Activated B cell treated with CpG ODN at 0.5 μM for 24 hours (primary cell): ENCODE measurements at regions of chr6 and their contacts with region 1.

Region 1: GRCh38 chr6:10747251-10747972 is at the start of gene TMEM14B:
- DNase-seq: peak; percentile 100
- ATAC-seq: peak; percentile 98
- H3K4me3 Mint-ChIP-seq: peak within 1 kb of the TSS; percentile 95
- H3K27ac Mint-ChIP-seq: peak within 1 kb of the TSS; percentile 93
- H3K4me1 Mint-ChIP-seq: peaks cover 34% of the 10 kb centered on the region
- H3K27me3 Mint-ChIP-seq: no peaks in the 10 kb centered on the region
- CTCF ChIP-seq: no peak
- total RNA-seq, gene TMEM14B: 60.3 and 63.4 TPM in 2 replicates

Region 2: GRCh38 chr6:10404107-10404798 is 343.2 kb before region 1 on chr6:
- CTCF ChIA-PET with region 1: no interaction called
- POLR2A ChIA-PET with region 1: no interaction called
- intact Hi-C with region 1: loop called (anchors 1 kb)
- DNase-seq: peak; percentile 80
- ATAC-seq: peak; percentile 94
- H3K4me3 Mint-ChIP-seq: peak overlapping the region; percentile 78
- H3K27ac Mint-ChIP-seq: peak overlapping the region; percentile 63
- H3K4me1 Mint-ChIP-seq: peaks cover 12% of the 10 kb centered on the region
- H3K27me3 Mint-ChIP-seq: peaks cover 54% of the 10 kb centered on the region
- CTCF ChIP-seq: no peak

Region 3: GRCh38 chr6:10528170-10528981 is 219.0 kb before region 1 on chr6:
- CTCF ChIA-PET with region 1: no interaction called
- POLR2A ChIA-PET with region 1: interaction called, 5 read pairs
- intact Hi-C with region 1: loop called (anchors 1 kb)
- DNase-seq: no peak
- ATAC-seq: peak; percentile 57
- H3K4me3 Mint-ChIP-seq: peak overlapping the region; percentile 97
- H3K27ac Mint-ChIP-seq: peak overlapping the region; percentile 96
- H3K4me1 Mint-ChIP-seq: peaks cover 65% of the 10 kb centered on the region
- H3K27me3 Mint-ChIP-seq: no peaks in the 10 kb centered on the region
- CTCF ChIP-seq: no peak

Region 4: GRCh38 chr6:10722820-10723566 is 24.4 kb before region 1 on chr6 and contains the start of gene TMEM14C:
- CTCF ChIA-PET with region 1: no interaction called
- POLR2A ChIA-PET with region 1: interaction called, 10 read pairs
- intact Hi-C with region 1: loop called (anchors 1 kb)
- DNase-seq: peak; percentile 78
- ATAC-seq: peak; percentile 98
- H3K4me3 Mint-ChIP-seq: peak within 1 kb of the TSS; percentile 93
- H3K27ac Mint-ChIP-seq: peak within 1 kb of the TSS; percentile 89
- H3K4me1 Mint-ChIP-seq: peaks cover 39% of the 10 kb centered on the region
- H3K27me3 Mint-ChIP-seq: no peaks in the 10 kb centered on the region
- CTCF ChIP-seq: no peak
- total RNA-seq, gene TMEM14C: 23.0 and 23.1 TPM in 2 replicates

Region 5: DNA sequence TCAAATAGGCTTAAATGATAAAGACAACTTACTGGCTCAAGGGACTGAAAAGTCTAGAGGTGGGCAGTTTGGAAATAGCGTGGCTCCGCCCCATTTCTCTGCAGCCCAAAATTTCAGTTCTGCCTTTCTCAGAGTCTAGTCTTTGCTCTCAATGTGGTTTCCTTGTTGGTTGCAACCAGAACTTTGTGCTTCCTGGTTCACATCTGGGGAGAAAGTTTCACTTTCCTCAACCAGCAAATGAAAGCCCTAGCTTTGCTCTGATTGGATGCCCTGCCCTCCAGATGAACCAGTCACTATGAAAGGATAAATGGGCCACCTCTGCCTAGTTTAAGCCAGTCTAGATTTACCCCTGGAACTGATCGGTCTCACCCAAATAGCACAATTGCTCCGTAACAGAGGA is 154.4 kb after region 1 on chr6:
- CTCF ChIA-PET with region 1: no interaction called
- POLR2A ChIA-PET with region 1: no interaction called
- intact Hi-C with region 1: loop called (anchors 1 kb)
- DNase-seq: no peak
- ATAC-seq: peak; percentile 94
- H3K4me3 Mint-ChIP-seq: peak overlapping the region; percentile 70
- H3K27ac Mint-ChIP-seq: peak overlapping the region; percentile 89
- H3K4me1 Mint-ChIP-seq: peaks cover 15% of the 10 kb centered on the region
- H3K27me3 Mint-ChIP-seq: no peaks in the 10 kb centered on the region
- CTCF ChIP-seq: no peak

Region 6: DNA sequence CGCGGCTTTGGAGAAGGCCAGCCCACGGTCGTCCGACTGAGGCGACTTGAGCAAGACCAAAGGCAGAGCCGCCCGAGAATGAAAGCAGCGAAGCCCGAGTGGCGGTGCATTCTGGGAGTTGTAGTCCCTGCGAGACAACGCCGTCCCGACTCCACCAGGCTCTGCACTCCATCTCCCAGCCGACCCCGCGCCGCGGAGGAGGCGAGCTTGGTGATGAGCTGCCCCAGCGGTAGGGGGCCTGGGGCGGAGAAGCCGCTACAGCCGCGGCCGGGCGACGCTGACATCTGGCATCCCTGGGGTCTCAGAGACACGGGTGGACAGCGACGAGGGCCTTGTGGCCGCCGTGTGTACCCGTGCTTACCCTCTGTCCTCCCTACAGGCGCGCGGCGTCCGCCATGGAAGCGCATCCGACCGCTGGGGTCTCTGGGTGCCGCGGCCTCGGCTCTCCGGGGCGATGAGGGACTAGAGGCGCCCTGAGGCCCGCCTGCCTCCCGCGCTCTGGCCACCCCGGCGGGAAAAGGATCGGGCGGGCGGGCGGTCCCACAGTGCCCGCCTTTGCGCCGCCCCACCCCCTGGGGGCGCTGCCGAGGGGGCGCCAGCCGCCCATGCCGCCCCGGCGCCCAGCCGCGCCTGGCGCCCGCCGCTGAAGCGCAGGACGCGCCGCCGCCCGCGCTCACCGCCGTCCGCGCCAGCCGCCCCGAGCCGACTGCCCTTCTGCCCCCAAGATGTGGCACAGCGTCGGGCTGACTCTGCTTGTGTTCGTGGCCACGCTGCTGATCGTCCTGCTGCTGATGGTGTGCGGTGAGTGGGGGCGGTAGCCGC is 346.4 kb after region 1 on chr6 and contains the start of gene SMIM13:
- CTCF ChIA-PET with region 1: no interaction called
- POLR2A ChIA-PET with region 1: no interaction called
- intact Hi-C with region 1: loop called (anchors 1 kb)
- DNase-seq: peak; percentile 90
- ATAC-seq: peak; percentile 90
- H3K4me3 Mint-ChIP-seq: peak within 1 kb of the TSS; percentile 96
- H3K27ac Mint-ChIP-seq: peak within 1 kb of the TSS; percentile 98
- H3K4me1 Mint-ChIP-seq: peaks cover 20% of the 10 kb centered on the region
- H3K27me3 Mint-ChIP-seq: peaks cover 3% of the 10 kb centered on the region
- CTCF ChIP-seq: no peak
- total RNA-seq, gene SMIM13: 5.8 and 5.9 TPM in 2 replicates

Region 7: GRCh38 chr6:11537229-11538051 is 790.0 kb after region 1 on chr6 and contains the start of gene TMEM170B:
- CTCF ChIA-PET with region 1: no interaction called
- POLR2A ChIA-PET with region 1: no interaction called
- intact Hi-C with region 1: loop called (anchors 5 kb)
- DNase-seq: peak; percentile 99
- ATAC-seq: peak; percentile 94
- H3K4me3 Mint-ChIP-seq: peak within 1 kb of the TSS; percentile 84
- H3K27ac Mint-ChIP-seq: peak within 1 kb of the TSS; percentile 74
- H3K4me1 Mint-ChIP-seq: peaks cover 11% of the 10 kb centered on the region
- H3K27me3 Mint-ChIP-seq: no peaks in the 10 kb centered on the region
- CTCF ChIP-seq: no peak
- total RNA-seq, gene TMEM170B: 2.6 and 2.8 TPM in 2 replicates